PC-3 (cell line): ENCODE measurements at regions of chrX and their contacts with region 1.

Region 1: DNA sequence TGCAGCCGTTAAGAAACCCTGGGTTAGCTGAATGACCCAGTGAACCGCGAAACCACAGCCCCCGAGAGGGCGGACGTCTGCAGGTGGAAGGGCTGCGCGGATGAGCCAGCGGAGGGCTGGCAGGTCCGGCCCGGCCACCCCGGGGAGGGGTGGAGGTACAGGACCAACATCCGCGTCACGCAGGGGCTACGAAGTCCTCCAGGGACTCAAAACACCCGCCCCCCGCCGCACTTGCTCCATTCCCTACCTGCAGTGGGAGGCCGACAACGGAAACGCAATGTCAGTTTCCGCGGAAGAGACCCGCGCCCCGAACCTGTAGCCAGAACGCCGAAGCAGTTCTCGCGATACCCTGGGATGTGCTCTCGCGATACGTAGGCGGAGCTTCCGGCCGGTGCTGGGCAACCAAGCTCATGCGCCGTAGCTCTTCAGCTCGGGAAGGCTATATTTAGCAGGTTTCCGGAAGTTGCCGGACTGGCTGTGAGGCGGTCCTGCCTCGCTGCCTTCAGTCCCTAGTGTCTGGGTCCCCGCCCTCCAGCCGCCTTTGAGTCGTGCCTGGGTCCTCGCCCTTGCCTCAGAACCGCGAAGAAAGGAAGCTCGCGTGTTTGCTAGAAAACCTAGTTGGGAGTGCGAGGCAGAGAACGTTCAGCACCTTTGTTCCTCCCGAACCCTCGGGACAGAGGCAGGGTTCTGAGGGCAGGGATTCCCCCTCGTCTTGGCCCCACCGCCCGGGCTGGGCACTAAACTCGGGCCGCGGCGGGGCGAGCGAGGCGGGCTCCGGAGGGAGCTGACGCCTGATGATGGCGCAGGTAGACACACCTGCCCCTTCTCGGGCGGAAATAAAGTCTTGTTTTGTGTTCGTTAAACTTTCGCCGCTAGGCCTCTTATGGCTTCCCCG is at the starts of genes OFD1 and TRAPPC2:
- DNase-seq: peak; percentile 96
- ATAC-seq: peak; percentile 97
- H3K4me3 ChIP-seq: peak within 1 kb of the TSS; percentile 100
- H3K27ac ChIP-seq: peak within 1 kb of the TSS; percentile 90
- H3K4me1 ChIP-seq: peaks cover 11% of the 10 kb centered on the region
- H3K27me3 ChIP-seq: no peaks in the 10 kb centered on the region
- CTCF ChIP-seq: no peak
- total RNA-seq, gene OFD1: 14.4 and 16.7 TPM in 2 replicates
- total RNA-seq, gene TRAPPC2: 7.9 and 8.6 TPM in 2 replicates

Region 2: GRCh38 chrX:12791257-12792228 is 943.0 kb before region 1 on chrX and contains the start of gene PRPS2:
- CTCF ChIA-PET with region 1: no interaction called
- POLR2A ChIA-PET with region 1: no interaction called
- intact Hi-C with region 1: no loop called
- DNase-seq: peak; percentile 51
- ATAC-seq: peak; percentile 90
- H3K4me3 ChIP-seq: peak within 1 kb of the TSS; percentile 78
- H3K27ac ChIP-seq: no peak within 1 kb of the TSS
- H3K4me1 ChIP-seq: peaks cover 10% of the 10 kb centered on the region
- H3K27me3 ChIP-seq: no peaks in the 10 kb centered on the region
- CTCF ChIP-seq: no peak
- total RNA-seq, gene PRPS2: 63.1 and 73.9 TPM in 2 replicates

Region 3: GRCh38 chrX:13346646-13347045 is 387.9 kb before region 1 on chrX:
- CTCF ChIA-PET with region 1: no interaction called
- POLR2A ChIA-PET with region 1: interaction called, 15 read pairs
- intact Hi-C with region 1: no loop called
- DNase-seq: no peak
- ATAC-seq: no peak
- H3K4me3 ChIP-seq: no peak overlapping the region
- H3K27ac ChIP-seq: no peak overlapping the region
- H3K4me1 ChIP-seq: peaks cover 3% of the 10 kb centered on the region; the same call in 1 of the 2 replicates
- H3K27me3 ChIP-seq: no peaks in the 10 kb centered on the region
- CTCF ChIP-seq: no peak

Region 4: DNA sequence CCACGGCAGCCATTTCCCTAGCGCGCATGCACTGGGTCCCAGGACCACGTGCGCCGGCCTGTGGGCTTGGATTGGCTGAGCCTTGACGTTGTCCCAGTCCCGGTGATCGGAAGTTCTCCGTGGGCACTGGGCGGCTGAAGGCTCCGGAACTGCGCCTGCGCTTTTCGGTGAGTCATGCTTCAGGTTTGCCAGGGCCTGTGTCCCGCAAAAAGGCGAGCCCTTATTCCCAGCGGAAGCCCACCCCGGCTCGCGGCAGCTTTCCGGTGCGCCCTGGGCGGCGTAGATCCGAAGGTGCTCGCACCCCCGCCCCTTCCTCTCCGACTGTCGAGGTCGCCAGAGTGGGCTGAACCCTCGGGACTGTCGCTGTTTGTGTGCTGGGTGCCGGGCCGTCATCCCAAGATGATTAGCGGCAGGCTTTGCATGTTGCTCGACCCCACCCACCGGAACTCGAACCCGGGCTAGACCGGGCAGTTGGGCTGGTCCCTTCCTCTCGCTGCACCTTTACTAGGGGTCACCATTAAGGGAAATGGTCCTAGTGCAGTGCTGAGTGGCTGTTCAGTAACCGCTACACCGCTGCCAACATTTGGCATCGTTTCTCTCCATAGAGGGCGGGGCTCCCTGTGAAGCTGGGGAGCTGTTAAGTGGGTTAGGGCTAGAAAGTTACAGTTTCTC is 81.4 kb before region 1 on chrX and contains the start of gene TCEANC:
- CTCF ChIA-PET with region 1: no interaction called
- POLR2A ChIA-PET with region 1: no interaction called
- intact Hi-C with region 1: loop called (anchors 2 kb)
- DNase-seq: peak; percentile 97
- ATAC-seq: peak; percentile 93
- H3K4me3 ChIP-seq: peak within 1 kb of the TSS; percentile 82
- H3K27ac ChIP-seq: peak within 1 kb of the TSS; percentile 98
- H3K4me1 ChIP-seq: peaks cover 28% of the 10 kb centered on the region
- H3K27me3 ChIP-seq: no peaks in the 10 kb centered on the region
- CTCF ChIP-seq: no peak
- total RNA-seq, gene TCEANC: 0.62 and 0.69 TPM in 2 replicates

Region 5: DNA sequence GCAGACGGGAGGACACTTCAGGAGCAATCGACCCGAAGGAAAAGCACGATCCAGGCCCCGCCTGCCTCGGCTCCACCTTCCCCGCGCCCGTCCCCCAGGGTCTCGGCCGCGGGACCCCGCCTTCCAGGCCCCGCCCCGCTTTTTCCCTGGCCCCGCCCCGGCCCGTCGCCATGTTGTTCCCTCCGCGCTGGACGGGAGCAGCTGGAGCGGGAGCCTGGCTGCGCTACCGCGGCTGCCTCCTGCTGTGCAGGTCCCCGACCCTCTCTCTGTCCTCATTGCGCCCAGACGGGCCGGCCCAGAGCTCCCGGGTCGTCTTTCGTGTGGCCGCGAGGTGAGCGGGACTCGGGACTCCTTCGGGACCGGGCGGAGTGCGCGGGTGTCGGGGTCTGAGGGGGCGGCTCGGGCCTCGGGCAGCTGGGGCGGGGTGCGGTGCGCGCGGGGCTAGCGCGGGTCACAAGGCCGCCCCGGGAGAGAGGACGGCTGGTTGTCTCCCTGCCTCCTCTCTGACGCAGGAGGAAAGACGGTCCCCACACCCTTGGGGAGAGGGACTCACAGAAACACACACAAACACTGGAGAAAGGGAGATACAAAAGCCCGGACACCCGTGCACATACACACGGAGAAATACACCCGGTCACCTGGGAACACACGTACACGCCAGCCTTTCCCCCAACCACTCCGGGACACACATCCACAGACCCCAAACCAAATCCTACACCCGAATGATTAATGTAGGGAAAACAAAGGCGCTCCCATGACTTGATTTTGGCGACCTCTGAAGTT is 45.4 kb before region 1 on chrX and contains the start of gene RAB9A:
- CTCF ChIA-PET with region 1: no interaction called
- POLR2A ChIA-PET with region 1: interaction called, 4 read pairs
- intact Hi-C with region 1: loop called (anchors 5 kb)
- DNase-seq: peak; percentile 76
- ATAC-seq: peak; percentile 83
- H3K4me3 ChIP-seq: peak within 1 kb of the TSS; percentile 99
- H3K27ac ChIP-seq: peak within 1 kb of the TSS; percentile 76
- H3K4me1 ChIP-seq: peaks cover 29% of the 10 kb centered on the region
- H3K27me3 ChIP-seq: no peaks in the 10 kb centered on the region
- CTCF ChIP-seq: no peak
- total RNA-seq, gene RAB9A: 21.0 and 29.5 TPM in 2 replicates

Region 6: DNA sequence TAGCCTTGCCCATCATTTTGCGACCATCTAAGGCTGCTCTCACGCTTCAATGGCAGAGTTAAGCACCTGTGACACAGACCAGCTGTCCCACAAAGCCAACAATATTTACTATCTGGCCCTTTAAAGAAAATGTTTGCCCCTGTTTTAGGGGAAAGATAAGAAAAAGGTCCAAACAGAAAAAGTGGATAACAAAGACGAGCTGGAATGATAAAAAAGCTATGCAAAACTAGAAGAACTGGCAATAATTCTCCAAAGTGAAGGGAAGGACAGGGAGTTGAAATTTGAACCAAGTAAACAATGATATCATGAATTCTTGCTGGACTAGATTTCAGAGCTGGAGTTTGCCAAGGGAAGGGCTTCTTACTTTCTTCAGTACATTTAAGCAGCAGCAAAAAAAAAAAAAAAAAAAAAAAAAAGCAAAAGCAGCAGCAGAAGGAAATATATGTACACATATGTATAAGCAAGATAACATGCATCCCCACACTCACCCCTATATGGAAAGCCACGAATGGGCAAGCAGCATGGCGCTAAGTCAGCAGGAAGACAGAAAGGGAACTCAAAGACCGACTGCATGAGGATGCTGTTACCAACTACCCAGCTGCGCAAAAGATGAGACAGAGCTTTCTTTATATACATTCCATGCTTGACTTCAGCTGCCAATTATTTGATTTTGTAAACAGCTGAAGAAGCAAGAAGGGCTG is 12.6 kb before region 1 on chrX:
- CTCF ChIA-PET with region 1: no interaction called
- POLR2A ChIA-PET with region 1: interaction called, 25 read pairs
- intact Hi-C with region 1: no loop called
- DNase-seq: peak; percentile 64
- ATAC-seq: peak; percentile 72
- H3K4me3 ChIP-seq: peak overlapping the region; percentile 45
- H3K27ac ChIP-seq: peak overlapping the region; percentile 76
- H3K4me1 ChIP-seq: peaks cover 26% of the 10 kb centered on the region
- H3K27me3 ChIP-seq: no peaks in the 10 kb centered on the region
- CTCF ChIP-seq: no peak